ENCODE measurements at regions of chr11 and their contacts with region 1.

Region 1: DNA sequence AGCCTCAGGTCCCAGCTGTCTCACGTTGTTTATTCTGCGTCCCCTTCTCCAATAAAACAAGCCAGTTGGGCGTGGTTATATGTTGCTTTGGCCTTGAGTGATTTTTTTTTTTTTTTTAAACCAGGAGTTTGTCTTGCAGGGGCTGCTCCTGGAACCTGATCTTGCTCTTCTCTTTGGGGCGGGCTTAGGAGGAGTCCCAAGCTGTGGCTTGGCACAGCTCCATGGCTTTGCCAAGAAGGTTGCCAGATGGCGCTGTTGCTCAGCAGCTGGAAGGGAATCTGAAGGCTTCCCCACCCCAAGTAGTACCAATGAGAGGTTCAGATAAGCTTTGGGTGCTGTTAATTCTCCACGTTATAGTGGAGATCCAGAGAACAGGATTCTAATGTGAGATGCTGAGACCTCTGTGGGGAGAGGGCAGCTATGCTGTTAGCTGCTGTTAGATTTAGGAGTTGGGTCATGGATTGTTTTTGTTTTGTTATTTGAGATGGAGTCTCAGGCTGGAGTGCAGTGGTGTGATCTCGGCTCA is 2.0 kb upstream of the FERMT3 start:
- DNase-seq: peak; percentile 82
- ATAC-seq: peak; percentile 43
- H3K4me3 Mint-ChIP-seq: peak overlapping the region; percentile 43
- H3K27ac Mint-ChIP-seq: peak overlapping the region; percentile 80
- H3K4me1 Mint-ChIP-seq: peaks cover 50% of the 10 kb centered on the region
- H3K27me3 Mint-ChIP-seq: no peaks in the 10 kb centered on the region

Region 2: GRCh38 chr11:63970902-63971301 is 233.6 kb before region 1 on chr11:
- CTCF ChIA-PET with region 1: no interaction called
- POLR2A ChIA-PET with region 1: no interaction called
- DNase-seq: no peak
- ATAC-seq: no peak
- H3K4me3 Mint-ChIP-seq: no peak overlapping the region
- H3K27ac Mint-ChIP-seq: no peak overlapping the region
- H3K4me1 Mint-ChIP-seq: peaks cover 15% of the 10 kb centered on the region
- H3K27me3 Mint-ChIP-seq: peaks cover 2% of the 10 kb centered on the region

Region 3: GRCh38 chr11:64185816-64186498 is 18.6 kb before region 1 on chr11 and contains the start of gene STIP1:
- CTCF ChIA-PET with region 1: interaction called, 87 read pairs
- POLR2A ChIA-PET with region 1: interaction called, 162 read pairs
- DNase-seq: peak; percentile 99
- ATAC-seq: peak; percentile 92
- H3K4me3 Mint-ChIP-seq: peak within 1 kb of the TSS; percentile 93
- H3K27ac Mint-ChIP-seq: peak within 1 kb of the TSS; percentile 98
- H3K4me1 Mint-ChIP-seq: peaks cover 53% of the 10 kb centered on the region
- H3K27me3 Mint-ChIP-seq: no peaks in the 10 kb centered on the region
- total RNA-seq, gene STIP1: 335 to 340 TPM

Region 4: GRCh38 chr11:64225612-64226506 is 21.3 kb after region 1 on chr11 and contains the starts of genes NUDT22 and TRPT1:
- CTCF ChIA-PET with region 1: interaction called, 66 read pairs
- POLR2A ChIA-PET with region 1: interaction called, 83 read pairs
- DNase-seq: peak; percentile 95
- ATAC-seq: peak; percentile 68
- H3K4me3 Mint-ChIP-seq: peak within 1 kb of the TSS; percentile 88
- H3K27ac Mint-ChIP-seq: peak within 1 kb of the TSS; percentile 91
- H3K4me1 Mint-ChIP-seq: peaks cover 42% of the 10 kb centered on the region
- H3K27me3 Mint-ChIP-seq: no peaks in the 10 kb centered on the region
- total RNA-seq, gene NUDT22: 86.7 to 91.6 TPM
- total RNA-seq, gene TRPT1: 37.8 to 44.8 TPM

Region 5: DNA sequence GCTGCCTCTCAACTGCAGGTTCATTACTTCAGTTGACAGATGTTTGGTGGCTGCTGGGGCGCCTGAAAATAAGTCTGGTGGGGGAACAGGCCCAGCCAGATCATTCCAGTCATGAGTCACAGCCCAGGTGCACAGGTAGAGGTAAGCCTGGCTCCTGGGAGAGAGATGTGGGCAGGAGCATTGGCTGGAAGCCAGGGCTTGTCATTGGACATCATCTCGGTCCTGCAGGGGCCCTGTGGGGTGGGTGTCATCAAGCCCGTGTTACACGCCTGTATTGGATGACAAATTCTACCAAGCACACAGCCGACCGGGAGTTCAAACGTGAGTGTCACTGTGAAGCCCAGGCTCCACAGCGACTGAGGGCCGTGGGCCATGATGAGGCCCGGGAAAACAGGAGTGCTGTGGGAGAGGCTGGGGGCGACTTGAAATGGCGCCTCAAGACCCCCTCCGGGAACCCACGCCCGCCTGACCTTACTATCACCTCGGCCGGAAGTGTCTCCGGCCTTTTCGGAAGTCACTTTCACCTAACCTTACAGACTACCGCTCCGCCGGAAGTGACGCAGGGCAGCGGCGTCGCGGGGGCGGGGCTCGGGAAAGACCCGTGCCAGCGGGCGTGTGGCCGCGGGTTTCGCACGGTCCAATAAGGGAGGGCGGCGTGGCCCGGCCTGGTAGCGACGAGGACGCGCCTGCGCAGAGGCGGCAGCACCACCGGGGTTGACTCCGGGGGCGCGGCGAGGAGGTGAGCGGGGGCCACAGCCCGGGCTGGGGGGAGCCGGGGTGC is 36.1 kb after region 1 on chr11 and contains the start of gene FKBP2:
- CTCF ChIA-PET with region 1: interaction called, 57 read pairs
- POLR2A ChIA-PET with region 1: interaction called, 39 read pairs
- DNase-seq: peak; percentile 98
- ATAC-seq: peak; percentile 76
- H3K4me3 Mint-ChIP-seq: peak within 1 kb of the TSS; percentile 89
- H3K27ac Mint-ChIP-seq: peak within 1 kb of the TSS; percentile 98
- H3K4me1 Mint-ChIP-seq: peaks cover 44% of the 10 kb centered on the region
- H3K27me3 Mint-ChIP-seq: no peaks in the 10 kb centered on the region
- total RNA-seq, gene FKBP2: 26.9 to 33.0 TPM

Region 6: DNA sequence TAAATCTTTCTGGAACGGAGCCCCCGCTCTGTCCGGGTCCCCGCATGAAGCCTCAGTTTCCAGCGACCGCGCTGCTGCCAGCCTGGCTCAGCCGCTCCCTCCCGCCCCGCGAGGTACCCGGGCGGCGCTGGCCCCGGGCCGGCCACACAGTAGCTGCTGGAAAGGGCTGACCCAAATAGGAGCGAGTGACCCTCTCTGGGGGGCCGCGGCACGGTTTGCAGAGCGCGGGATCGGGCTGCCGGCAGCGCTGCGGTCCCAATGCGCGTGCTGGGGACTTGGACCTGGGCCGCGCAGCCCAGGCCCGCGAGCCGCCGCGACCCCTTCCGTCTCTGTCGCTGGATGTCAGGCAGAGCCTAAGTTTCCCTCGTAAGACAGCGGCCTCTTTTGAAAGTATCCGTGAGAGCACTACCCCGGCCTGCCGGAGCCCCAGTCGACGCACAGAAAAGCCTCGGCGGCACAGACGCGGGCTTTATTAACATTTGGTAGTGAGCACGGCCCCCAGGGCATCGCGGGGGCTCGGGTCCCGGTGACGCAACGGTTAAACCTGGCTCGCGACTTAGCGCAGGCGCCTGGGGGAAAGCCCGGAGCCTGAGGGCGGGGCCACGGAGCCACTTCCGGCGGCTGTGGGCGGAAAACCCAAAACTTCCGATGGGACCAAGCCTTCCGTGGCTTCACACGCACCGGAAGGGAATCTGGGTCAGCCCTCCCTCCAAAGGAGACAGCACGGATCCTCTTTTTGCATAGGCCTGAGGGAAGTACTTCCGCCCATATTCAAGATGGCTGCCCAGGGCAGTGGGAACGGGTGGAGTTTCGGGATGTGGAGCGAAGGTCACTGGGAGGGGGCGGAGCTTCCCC is 65.1 kb after region 1 on chr11:
- CTCF ChIA-PET with region 1: interaction called, 43 read pairs
- POLR2A ChIA-PET with region 1: interaction called, 48 read pairs
- DNase-seq: peak; percentile 97
- ATAC-seq: peak; percentile 74
- H3K4me3 Mint-ChIP-seq: peak overlapping the region; percentile 93
- H3K27ac Mint-ChIP-seq: peak overlapping the region; percentile 97
- H3K4me1 Mint-ChIP-seq: peaks cover 34% of the 10 kb centered on the region
- H3K27me3 Mint-ChIP-seq: no peaks in the 10 kb centered on the region

Region 7: DNA sequence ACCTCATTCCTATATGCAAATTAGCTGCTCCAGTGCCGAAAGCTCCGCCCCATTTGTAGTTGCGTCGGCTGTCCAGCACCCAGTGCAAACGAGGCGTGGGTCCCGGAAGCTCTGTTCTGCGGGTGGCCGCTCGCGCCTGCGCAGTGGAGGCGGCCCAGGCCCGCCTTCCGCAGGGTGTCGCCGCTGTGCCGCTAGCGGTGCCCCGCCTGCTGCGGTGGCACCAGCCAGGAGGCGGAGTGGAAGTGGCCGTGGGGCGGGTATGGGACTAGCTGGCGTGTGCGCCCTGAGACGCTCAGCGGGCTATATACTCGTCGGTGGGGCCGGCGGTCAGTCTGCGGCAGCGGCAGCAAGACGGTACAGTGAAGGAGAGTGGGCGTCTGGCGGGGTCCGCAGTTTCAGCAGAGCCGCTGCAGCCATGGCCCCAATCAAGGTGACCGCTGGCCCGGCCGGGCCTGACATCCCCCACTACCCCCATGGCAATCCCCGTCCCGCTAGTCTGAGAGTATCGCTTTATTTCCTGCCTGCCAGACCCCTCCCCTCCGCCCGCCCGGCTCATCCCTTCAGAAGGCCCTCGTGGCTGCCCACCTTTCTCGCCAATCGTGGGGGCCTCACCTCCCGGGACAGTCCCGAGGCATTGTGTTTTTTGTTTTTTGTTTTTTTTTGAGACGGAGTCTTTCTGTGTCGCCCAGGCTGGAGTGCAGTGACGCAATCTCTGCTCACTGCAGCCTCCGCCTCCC is 113.6 kb after region 1 on chr11 and contains the start of gene PRDX5:
- CTCF ChIA-PET with region 1: interaction called, 14 read pairs
- POLR2A ChIA-PET with region 1: interaction called, 18 read pairs
- DNase-seq: peak; percentile 96
- ATAC-seq: peak; percentile 80
- H3K4me3 Mint-ChIP-seq: peak within 1 kb of the TSS; percentile 89
- H3K27ac Mint-ChIP-seq: peak within 1 kb of the TSS; percentile 100
- H3K4me1 Mint-ChIP-seq: peaks cover 47% of the 10 kb centered on the region
- H3K27me3 Mint-ChIP-seq: no peaks in the 10 kb centered on the region
- total RNA-seq, gene PRDX5: 102 to 106 TPM

Region 8: DNA sequence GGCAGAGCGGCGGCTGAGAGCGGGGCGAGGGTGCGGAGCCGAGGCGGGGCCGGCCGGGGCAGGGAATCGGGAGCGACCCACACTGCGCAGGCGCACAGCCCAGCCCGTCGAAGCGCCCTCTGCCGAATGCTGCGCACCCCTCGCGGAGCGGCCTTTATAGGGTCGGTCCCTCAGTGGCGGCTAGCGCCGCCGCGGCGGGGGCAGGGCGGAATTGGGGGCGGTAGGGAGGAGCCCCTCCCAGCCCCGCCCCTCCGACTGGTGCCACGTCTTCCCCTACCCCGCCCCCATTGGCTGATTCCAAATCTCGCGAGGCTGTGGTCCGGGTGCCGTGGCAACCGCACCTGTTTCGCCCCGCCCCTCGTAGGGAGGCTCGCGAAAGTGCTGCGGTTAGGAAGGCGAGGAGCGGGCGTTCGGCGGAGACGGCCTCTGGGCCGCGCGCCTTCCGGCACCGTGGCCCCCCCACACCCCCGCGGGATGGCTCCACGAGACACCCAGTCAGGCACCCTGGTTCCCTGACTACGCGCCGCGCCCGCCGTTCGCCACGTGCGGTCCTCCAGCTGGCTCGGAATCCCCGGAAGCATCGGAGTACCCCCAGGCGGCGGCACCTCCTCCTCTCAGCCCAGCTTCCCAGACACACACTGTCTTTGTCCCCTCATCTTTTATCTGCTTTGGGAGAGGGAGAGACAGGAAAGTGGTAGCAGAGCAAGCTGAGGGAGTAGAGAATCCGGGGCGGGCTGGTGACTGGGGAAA is 674.1 kb after region 1 on chr11 and contains the start of gene EHD1:
- CTCF ChIA-PET with region 1: no interaction called
- POLR2A ChIA-PET with region 1: no interaction called
- DNase-seq: peak; percentile 100
- ATAC-seq: peak; percentile 81
- H3K4me3 Mint-ChIP-seq: peak within 1 kb of the TSS; percentile 98
- H3K27ac Mint-ChIP-seq: peak within 1 kb of the TSS; percentile 92
- H3K4me1 Mint-ChIP-seq: peaks cover 62% of the 10 kb centered on the region
- H3K27me3 Mint-ChIP-seq: no peaks in the 10 kb centered on the region
- total RNA-seq, gene EHD1: 145 to 150 TPM

Measured in activated CD8-positive, alpha-beta T cell treated with anti-CD3 and anti-CD28 coated beads, Interleukin-2, amount 10 ng/mL, durations not matched to agents 7 days and 5 days (primary cell).